ENCODE measurements at regions of chr1 and their contacts with region 1.

Region 1: GRCh38 chr1:32933742-32934322 is 30.8 kb downstream of the RNF19B start:
- DNase-seq: no peak
- ATAC-seq: peak in 1 of 4 donors; percentile 35
- H3K4me3 ChIP-seq: no peak overlapping the region
- H3K27ac ChIP-seq: no peak overlapping the region
- H3K4me1 ChIP-seq: no peaks in the 10 kb centered on the region
- H3K27me3 ChIP-seq: no peaks in the 10 kb centered on the region
- CTCF ChIP-seq: no peak

Region 2: DNA sequence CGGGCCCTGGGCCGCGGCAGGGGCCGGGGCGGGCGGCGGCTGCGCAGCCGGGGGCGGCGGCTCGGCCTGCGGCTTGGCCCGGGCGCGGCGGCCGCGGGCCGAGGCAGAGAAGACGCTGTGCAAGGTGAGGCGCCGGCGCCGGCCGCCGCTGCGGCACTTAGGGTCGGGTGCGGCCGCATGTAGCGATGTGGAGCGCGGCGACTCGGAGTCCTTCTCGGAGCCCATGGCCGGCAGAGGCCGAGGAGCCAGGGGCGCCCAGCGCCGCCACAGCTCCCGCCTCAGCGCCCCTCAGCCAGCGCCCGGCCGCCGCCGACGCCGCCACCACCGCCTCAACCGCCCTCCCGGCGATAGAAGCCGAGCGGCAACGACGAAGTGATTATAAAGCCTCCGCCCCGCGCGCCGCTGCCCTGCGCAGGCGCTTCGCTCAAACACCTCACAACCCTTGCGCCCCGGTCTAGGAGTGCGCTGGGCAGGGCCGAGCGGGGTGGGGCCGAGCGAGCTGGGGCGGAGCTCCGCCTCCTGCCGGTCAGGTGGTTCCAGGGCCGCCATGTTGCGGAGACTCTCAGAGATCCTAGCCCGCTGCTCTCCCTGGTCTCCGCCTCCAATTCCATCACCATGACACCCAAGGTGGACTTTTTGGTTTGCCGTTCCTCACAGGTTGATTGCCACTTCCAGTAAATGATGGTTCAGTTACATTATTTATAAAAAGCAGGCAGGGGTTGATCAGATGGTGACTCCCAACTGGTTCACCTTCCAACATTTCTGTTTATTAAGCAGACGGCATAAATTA is 30.8 kb after region 1 on chr1 and contains the start of gene RNF19B:
- intact Hi-C with region 1: no loop called
- DNase-seq: peak; percentile 95 to 97
- ATAC-seq: peak; percentile 99
- H3K4me3 ChIP-seq: peak within 1 kb of the TSS; percentile 98
- H3K27ac ChIP-seq: peak within 1 kb of the TSS; percentile 93
- H3K4me1 ChIP-seq: peaks cover 30% of the 10 kb centered on the region
- H3K27me3 ChIP-seq: peaks cover 0 to 6% (median 0%) of the 10 kb centered on the region in 3 donors
- CTCF ChIP-seq: no peak
- total RNA-seq, gene RNF19B: 13.1 to 23.4 (median 18.9) TPM

Region 3: GRCh38 chr1:33007190-33008050 is 73.6 kb after region 1 on chr1:
- intact Hi-C with region 1: loop called in 1 of 2 experiments (anchors 5 kb)
- DNase-seq: peak in 1 of 2 donors; percentile 40
- ATAC-seq: peak; percentile 81 to 93 (median 88)
- H3K4me3 ChIP-seq: no peak overlapping the region
- H3K27ac ChIP-seq: no peak overlapping the region
- H3K4me1 ChIP-seq: peaks cover 41% of the 10 kb centered on the region
- H3K27me3 ChIP-seq: no peaks in the 10 kb centered on the region
- CTCF ChIP-seq: peak; percentile 48

Region 4: GRCh38 chr1:33055210-33056008 is 121.6 kb after region 1 on chr1:
- intact Hi-C with region 1: loop called (anchors 2 to 5 kb)
- DNase-seq: peak; percentile 79 to 88
- ATAC-seq: peak; percentile 90 to 92 (median 91)
- H3K4me3 ChIP-seq: no peak overlapping the region
- H3K27ac ChIP-seq: peak overlapping the region; percentile 59
- H3K4me1 ChIP-seq: no peaks in the 10 kb centered on the region
- H3K27me3 ChIP-seq: no peaks in the 10 kb centered on the region
- CTCF ChIP-seq: peak; percentile 75

Region 5: GRCh38 chr1:33086384-33086850 is 152.6 kb after region 1 on chr1:
- intact Hi-C with region 1: loop called (anchors 2 to 5 kb)
- DNase-seq: peak; percentile 78 to 86
- ATAC-seq: peak; percentile 64 to 76 (median 70)
- H3K4me3 ChIP-seq: no peak overlapping the region
- H3K27ac ChIP-seq: no peak overlapping the region
- H3K4me1 ChIP-seq: peaks cover 16% of the 10 kb centered on the region
- H3K27me3 ChIP-seq: no peaks in the 10 kb centered on the region
- CTCF ChIP-seq: peak; percentile 71